ENCODE measurements at regions of chr3 and their contacts with region 1.

Region 1: DNA sequence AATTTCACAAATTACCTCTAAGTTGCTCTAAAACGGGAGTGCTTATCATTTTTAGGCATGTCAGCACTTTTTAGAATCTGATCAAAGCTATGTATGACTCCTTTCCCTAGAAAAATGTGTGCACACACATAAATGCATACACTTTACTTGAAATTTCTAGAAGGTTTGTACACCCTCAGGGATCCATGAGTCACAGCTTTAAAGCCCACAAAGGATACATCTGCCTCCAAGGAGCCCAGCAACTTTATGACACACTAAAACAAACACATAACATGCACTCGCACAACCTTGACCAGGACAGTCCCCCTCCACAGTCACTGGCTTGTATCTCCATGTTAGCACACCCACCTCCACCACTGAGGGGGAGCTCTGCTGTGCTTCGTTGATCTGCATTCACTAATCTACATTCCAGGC is 722.0 kb upstream of the CFAP20DC start:
- DNase-seq: no peak
- ATAC-seq: no peak
- H3K4me3 ChIP-seq: no peak overlapping the region
- H3K4me3 Mint-ChIP-seq: peak overlapping the region in 5 of 10 donors; percentile 67 to 79 (median 73)
- H3K27ac ChIP-seq: no peak overlapping the region
- H3K27ac Mint-ChIP-seq: peak overlapping the region in 4 of 9 donors; percentile 28 to 65 (median 53)
- H3K4me1 ChIP-seq: peaks cover 19 to 42% of the 10 kb centered on the region in 2 donors
- H3K4me1 Mint-ChIP-seq: peaks cover 37 to 86% (median 74%) of the 10 kb centered on the region in 7 donors
- H3K27me3 ChIP-seq: no peaks in the 10 kb centered on the region
- H3K27me3 Mint-ChIP-seq: no peaks in the 10 kb centered on the region

Region 2: GRCh38 chr3:59698091-59698490 is 73.7 kb before region 1 on chr3:
- CTCF ChIA-PET with region 1: no interaction called
- POLR2A ChIA-PET with region 1: no interaction called
- intact Hi-C with region 1: no loop called
- DNase-seq: no peak
- ATAC-seq: no peak
- H3K4me3 ChIP-seq: no peak overlapping the region
- H3K4me3 Mint-ChIP-seq: no peak overlapping the region
- H3K27ac ChIP-seq: no peak overlapping the region
- H3K27ac Mint-ChIP-seq: peak overlapping the region in 1 of 9 donors; percentile 44
- H3K4me1 ChIP-seq: no peaks in the 10 kb centered on the region
- H3K4me1 Mint-ChIP-seq: peaks cover 0 to 7% (median 0%) of the 10 kb centered on the region in 7 donors
- H3K27me3 ChIP-seq: no peaks in the 10 kb centered on the region
- H3K27me3 Mint-ChIP-seq: peaks cover 0 to 5% (median 0%) of the 10 kb centered on the region in 5 donors

Region 3: DNA sequence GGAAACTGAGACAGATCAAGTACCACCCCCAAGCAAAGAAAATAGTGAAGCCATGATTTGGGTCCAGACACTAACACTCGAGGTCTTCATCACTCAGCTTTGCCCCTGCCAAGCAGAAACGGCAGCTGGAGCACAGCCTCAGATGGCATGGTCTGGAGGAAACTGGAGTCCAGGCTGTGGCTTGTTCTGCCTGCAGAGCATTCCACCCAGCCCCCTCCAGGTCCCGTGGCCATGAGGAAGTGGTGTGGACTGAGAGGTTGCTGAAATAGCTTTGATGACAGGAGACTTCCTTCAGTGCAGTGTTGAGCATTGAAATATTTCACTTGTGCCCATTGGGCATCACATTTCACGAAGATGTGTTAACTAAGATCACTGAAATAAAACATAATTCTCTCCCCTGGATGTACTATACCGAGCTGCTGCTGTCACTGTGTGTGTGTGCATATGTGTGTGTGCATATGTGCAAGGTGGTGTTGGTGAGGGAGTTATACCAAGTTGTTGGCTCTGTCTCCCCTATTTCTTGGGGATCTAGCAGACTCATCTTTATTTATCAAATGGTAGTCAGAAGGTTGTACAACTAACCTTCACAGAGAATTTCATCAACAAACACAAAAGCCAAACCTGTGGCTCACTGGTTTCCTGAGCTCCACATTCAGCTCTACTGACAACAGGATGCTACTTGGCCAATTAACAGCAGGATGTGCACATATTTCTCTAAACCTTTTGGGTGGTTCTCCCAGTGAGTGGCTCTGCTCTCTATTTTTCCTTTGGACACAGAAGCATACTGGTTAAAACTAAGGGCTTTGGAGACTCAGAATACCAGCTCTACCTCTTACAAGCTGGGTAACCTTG is 61.8 kb before region 1 on chr3:
- CTCF ChIA-PET with region 1: no interaction called
- POLR2A ChIA-PET with region 1: no interaction called
- intact Hi-C with region 1: loop called in 1 of 2 experiments (anchors 5 kb)
- DNase-seq: peak in 6 of 9 donors; percentile 7 to 47 (median 36)
- ATAC-seq: peak; percentile 88
- H3K4me3 ChIP-seq: no peak overlapping the region
- H3K4me3 Mint-ChIP-seq: no peak overlapping the region
- H3K27ac ChIP-seq: no peak overlapping the region
- H3K27ac Mint-ChIP-seq: no peak overlapping the region
- H3K4me1 ChIP-seq: peaks cover 0 to 17% of the 10 kb centered on the region in 2 donors
- H3K4me1 Mint-ChIP-seq: peaks cover 0 to 4% (median 3%) of the 10 kb centered on the region in 7 donors
- H3K27me3 ChIP-seq: no peaks in the 10 kb centered on the region
- H3K27me3 Mint-ChIP-seq: peaks cover 0 to 2% (median 0%) of the 10 kb centered on the region in 5 donors

Region 4: DNA sequence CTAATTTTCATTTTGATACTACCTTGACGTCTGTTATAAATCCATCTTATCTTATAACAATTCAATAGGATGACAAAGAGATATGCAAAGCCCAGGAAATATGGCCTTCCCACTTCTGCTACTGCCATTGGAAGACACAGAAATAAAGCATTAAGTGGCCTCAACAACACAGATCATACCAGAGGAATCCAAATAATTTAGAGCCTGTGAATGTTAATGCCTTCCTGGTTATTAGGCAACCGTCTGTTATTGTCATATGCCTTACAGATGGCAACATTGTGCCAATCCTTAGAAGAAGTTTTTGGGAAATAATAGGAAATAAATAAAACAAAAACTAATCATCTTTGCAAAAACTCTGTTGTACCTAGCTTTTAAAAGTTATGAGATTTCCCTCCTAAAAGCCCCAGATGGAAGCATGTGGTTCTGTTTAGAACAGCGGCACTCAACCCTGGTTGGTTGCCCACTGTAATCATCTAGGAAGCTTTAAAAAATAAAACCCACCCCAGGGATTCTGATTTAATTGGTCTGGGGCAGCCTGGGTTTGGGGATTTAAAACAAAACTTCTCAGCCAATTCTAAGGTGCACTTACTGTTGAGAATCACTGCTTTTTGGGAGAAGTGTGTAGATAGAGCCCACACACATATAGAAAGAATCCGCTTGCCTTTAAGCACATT is 17.2 kb before region 1 on chr3:
- CTCF ChIA-PET with region 1: no interaction called
- POLR2A ChIA-PET with region 1: interaction called, 4 read pairs
- intact Hi-C with region 1: loop called in 1 of 2 experiments (anchors 2 kb)
- DNase-seq: no peak
- ATAC-seq: no peak
- H3K4me3 ChIP-seq: no peak overlapping the region
- H3K4me3 Mint-ChIP-seq: peak overlapping the region; percentile 21 to 77 (median 53)
- H3K27ac ChIP-seq: no peak overlapping the region
- H3K27ac Mint-ChIP-seq: peak overlapping the region in 7 of 9 donors; percentile 32 to 76 (median 64)
- H3K4me1 ChIP-seq: peaks cover 0 to 60% of the 10 kb centered on the region in 2 donors
- H3K4me1 Mint-ChIP-seq: peaks cover 40 to 97% (median 78%) of the 10 kb centered on the region in 7 donors
- H3K27me3 ChIP-seq: no peaks in the 10 kb centered on the region
- H3K27me3 Mint-ChIP-seq: no peaks in the 10 kb centered on the region

Region 5: GRCh38 chr3:59791774-59792308 is 20.1 kb after region 1 on chr3:
- CTCF ChIA-PET with region 1: no interaction called
- POLR2A ChIA-PET with region 1: interaction called, 4 read pairs
- intact Hi-C with region 1: loop called in 1 of 2 experiments (anchors 2 kb)
- DNase-seq: no peak
- ATAC-seq: no peak
- H3K4me3 ChIP-seq: no peak overlapping the region
- H3K4me3 Mint-ChIP-seq: no peak overlapping the region
- H3K27ac ChIP-seq: no peak overlapping the region
- H3K27ac Mint-ChIP-seq: no peak overlapping the region
- H3K4me1 ChIP-seq: no peaks in the 10 kb centered on the region
- H3K4me1 Mint-ChIP-seq: peaks cover 15 to 86% (median 76%) of the 10 kb centered on the region in 7 donors
- H3K27me3 ChIP-seq: no peaks in the 10 kb centered on the region
- H3K27me3 Mint-ChIP-seq: no peaks in the 10 kb centered on the region